Activated CD4-positive, alpha-beta memory T cell treated with anti-CD3 and anti-CD28 coated beads for 36 hours (primary cell): ENCODE measurements at regions of chr17 and their contacts with region 1.

Region 1: DNA sequence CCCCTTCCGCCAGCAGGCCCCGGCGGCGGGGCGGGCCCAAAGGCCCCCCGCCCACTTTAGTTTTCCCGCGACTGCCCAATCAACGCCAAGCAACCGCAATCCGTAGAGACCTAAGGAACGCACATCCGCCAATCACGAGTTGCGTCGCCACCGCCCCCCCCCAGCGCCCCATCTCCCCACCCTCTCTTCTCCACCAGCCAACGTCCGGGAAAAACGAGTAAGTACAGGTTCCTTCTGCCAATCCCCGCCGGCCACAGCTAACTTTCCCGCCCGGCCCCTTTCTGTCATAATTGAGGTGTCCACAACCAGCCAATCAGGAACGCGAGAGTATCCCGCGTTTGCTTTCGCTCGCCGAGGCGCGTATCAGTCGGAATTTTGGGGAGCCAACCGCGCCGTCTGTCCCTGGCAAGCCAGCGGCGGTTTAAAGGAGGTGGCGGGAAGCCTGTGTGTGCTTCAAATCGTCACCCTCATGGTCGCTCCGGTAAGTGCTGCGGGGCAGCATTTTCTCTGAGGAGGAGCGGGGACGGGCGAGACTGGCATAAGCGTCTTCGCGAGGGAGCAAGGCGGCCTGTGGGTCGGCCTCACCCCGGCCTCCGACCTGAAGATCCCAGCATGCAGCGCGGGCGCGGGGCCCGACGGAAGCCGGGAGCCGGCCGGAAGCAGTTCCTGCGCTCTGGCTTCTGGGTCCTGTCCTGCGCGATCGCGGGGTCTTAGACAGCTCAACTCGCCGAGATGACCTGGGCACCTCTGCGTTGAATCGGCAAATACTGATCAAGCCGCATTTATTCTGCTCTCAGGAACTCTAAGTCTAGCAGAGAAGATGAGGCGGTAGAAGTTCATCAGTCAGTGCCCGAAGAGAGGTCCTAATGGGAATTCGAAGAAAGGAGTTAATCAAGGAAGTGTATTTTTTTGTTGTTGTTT is at the start of gene MIS12:
- DNase-seq: peak; percentile 99
- H3K4me3 Mint-ChIP-seq: peak within 1 kb of the TSS; percentile 88
- H3K27ac Mint-ChIP-seq: peak within 1 kb of the TSS; percentile 98
- H3K4me1 Mint-ChIP-seq: peaks cover 54% of the 10 kb centered on the region
- H3K27me3 Mint-ChIP-seq: no peaks in the 10 kb centered on the region
- total RNA-seq, gene MIS12: 30.4 to 32.0 TPM

Region 2: GRCh38 chr17:5419356-5419958 is 67.0 kb before region 1 on chr17 and contains the start of gene NUP88:
- CTCF ChIA-PET with region 1: no interaction called
- POLR2A ChIA-PET with region 1: interaction called, 13 read pairs
- intact Hi-C with region 1: loop called (anchors 1 kb)
- DNase-seq: peak; percentile 98
- H3K4me3 Mint-ChIP-seq: peak within 1 kb of the TSS; percentile 99
- H3K27ac Mint-ChIP-seq: peak within 1 kb of the TSS; percentile 98
- H3K4me1 Mint-ChIP-seq: peaks cover 50% of the 10 kb centered on the region
- H3K27me3 Mint-ChIP-seq: no peaks in the 10 kb centered on the region
- total RNA-seq, gene NUP88: 110 to 113 TPM

Region 3: GRCh38 chr17:5468075-5468473 is 18.4 kb before region 1 on chr17:
- CTCF ChIA-PET with region 1: interaction called, 6 read pairs
- POLR2A ChIA-PET with region 1: interaction called, 29 read pairs
- intact Hi-C with region 1: loop called (anchors 1 kb)
- DNase-seq: peak; percentile 30
- H3K4me3 Mint-ChIP-seq: peak overlapping the region; percentile 85
- H3K27ac Mint-ChIP-seq: peak overlapping the region; percentile 40
- H3K4me1 Mint-ChIP-seq: peaks cover 40% of the 10 kb centered on the region
- H3K27me3 Mint-ChIP-seq: no peaks in the 10 kb centered on the region

Region 4: GRCh38 chr17:5500589-5501391 is 14.3 kb after region 1 on chr17:
- CTCF ChIA-PET with region 1: interaction called, 3 read pairs
- POLR2A ChIA-PET with region 1: interaction called, 17 read pairs
- intact Hi-C with region 1: no loop called
- DNase-seq: peak; percentile 83
- H3K4me3 Mint-ChIP-seq: peak overlapping the region; percentile 89
- H3K27ac Mint-ChIP-seq: no peak overlapping the region
- H3K4me1 Mint-ChIP-seq: peaks cover 12% of the 10 kb centered on the region
- H3K27me3 Mint-ChIP-seq: no peaks in the 10 kb centered on the region

Region 5: DNA sequence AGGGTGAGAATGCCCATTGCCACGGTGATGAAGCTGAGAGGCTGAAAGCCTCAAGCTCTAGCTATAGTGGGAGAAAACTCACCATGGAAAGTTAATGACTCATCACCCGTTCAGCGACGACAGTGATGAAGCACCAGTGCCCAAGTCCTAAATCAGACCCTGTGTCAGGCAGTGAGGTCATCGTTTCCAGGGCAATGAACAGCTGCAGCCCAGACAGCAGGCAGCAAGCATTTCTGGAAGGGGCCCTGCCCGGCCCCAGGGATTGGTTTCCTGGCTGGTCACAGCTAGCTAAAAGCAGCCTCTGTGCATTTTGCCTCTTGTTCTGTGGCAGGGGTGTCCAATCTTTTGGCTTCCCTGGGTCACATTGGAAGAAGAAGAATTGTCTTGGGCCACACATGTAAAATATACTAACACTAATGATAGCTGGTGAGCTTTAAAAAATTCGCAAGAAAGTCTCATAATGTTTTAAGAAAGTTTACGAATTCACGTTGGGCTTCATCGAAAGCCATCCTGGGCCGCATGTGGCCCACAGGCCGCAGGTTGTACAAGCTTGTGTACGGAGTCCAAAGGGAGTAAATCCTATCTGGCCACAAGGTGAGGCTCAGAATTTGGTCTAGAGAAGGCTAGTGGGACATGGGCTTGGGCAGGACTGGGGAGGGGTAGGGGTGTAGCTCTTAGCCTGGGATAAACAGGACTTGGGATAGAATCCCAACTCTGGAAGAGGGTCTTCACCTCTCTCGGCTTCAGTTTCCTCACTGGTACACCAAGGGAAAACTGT is 40.5 kb after region 1 on chr17:
- CTCF ChIA-PET with region 1: interaction called, 3 read pairs
- POLR2A ChIA-PET with region 1: interaction called, 6 read pairs
- intact Hi-C with region 1: loop called (anchors 1 kb)
- DNase-seq: peak; percentile 86
- H3K4me3 Mint-ChIP-seq: no peak overlapping the region
- H3K27ac Mint-ChIP-seq: peak overlapping the region; percentile 79
- H3K4me1 Mint-ChIP-seq: peaks cover 15% of the 10 kb centered on the region
- H3K27me3 Mint-ChIP-seq: no peaks in the 10 kb centered on the region

Region 6: DNA sequence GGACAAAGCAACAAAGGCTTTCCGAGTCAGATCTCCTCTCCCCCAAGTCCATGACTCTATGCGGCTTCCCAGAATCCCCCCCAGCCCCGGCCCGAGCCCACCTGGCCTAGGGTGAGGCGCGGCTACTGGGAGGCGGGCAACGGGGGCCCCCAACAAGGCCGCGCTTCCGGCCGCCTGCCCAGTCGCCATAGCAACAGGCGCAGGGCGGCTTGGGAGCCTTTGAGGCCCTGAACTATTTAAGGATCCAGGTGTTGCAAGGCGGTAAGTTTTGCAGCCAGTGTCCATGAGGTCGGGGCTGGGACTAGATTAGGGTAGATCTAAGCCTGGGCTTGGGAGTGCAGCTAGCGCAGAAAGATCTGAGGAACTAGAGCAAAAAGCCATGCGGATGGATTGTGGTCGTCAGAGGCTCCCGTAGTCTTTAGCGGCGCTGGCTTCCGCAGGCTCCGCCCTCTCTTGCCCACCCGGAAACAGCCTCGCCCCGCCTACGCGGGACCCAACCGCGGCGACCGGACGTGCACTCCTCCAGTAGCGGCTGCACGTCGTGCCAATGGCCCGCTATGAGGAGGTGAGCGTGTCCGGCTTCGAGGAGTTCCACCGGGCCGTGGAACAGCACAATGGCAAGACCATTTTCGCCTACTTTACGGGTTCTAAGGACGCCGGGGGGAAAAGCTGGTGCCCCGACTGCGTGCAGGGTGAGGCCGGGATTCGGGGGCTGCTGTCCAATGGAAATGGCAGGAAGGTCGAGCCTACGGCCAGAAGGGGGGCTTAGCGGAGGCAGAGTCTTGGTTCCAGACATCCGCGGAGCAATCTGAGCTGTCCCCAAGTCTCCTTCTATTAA is 1154.3 kb after region 1 on chr17 and contains the starts of genes KIAA0753 and TXNDC17:
- CTCF ChIA-PET with region 1: no interaction called
- POLR2A ChIA-PET with region 1: no interaction called
- intact Hi-C with region 1: loop called (anchors 2 kb)
- DNase-seq: peak; percentile 96
- H3K4me3 Mint-ChIP-seq: peak within 1 kb of the TSS; percentile 90
- H3K27ac Mint-ChIP-seq: peak within 1 kb of the TSS; percentile 95
- H3K4me1 Mint-ChIP-seq: peaks cover 59% of the 10 kb centered on the region
- H3K27me3 Mint-ChIP-seq: no peaks in the 10 kb centered on the region
- total RNA-seq, gene KIAA0753: 14.2 to 14.7 TPM
- total RNA-seq, gene TXNDC17: 107 to 123 TPM